Activated T-helper 1 cell treated with anti-CD3 and anti-CD28 coated beads, Interleukin-12 subunit alpha, Interleukin-12 subunit beta, Interleukin-2, Interleukin-4 antibody, amounts not matched to agents 30 ng/mL and 10 ng/mL and 1 ng/mL, durations not matched to agents 14 hours and 24 hours and 36 hours (primary cell): ENCODE measurements at regions of chr1 and their contacts with region 1.

Region 1: DNA sequence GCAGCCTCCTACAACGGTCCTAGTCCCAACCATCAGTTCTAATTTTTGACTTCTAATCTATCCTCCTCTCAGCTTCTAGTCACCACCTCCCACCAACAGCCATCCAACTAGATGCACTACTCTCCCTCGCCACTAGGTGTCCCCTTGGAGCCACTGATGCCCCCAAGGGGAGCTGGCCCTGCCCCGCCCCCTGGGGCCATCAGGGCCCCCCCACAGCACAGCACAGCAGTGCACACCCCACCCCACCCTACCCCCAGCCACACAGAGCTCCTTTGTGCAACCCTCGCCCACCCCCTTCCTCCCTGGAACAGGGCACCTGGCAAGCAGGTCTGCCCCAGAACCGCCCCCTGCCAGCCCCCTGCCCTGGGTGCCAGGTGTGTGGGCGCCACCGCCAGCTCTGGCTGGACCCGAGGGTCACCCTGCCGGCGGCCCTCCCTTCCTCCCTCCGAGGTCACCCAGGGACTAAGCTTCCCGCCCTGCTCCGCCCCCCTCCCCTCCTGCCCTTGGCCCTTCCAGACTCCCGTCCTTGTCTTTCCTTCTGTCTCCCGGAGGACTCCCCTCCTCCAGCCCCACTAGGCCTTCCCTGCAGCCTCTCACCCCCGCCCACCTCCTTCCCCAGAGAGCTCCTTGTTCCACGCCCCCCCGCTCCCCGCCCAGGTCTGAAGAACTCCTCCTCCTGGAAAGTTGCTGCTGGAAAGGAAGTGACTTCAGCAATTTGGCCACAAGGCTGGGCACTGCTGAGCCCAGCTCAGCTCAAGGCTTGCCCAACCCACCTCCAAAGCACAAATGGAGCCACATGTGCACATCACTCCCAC is 47.0 kb downstream of the AHDC1 start:
- DNase-seq: peak; percentile 65
- H3K4me3 Mint-ChIP-seq: peak overlapping the region; percentile 54
- H3K27ac Mint-ChIP-seq: peak overlapping the region; percentile 84
- H3K4me1 Mint-ChIP-seq: peaks cover 49% of the 10 kb centered on the region
- H3K27me3 Mint-ChIP-seq: no peaks in the 10 kb centered on the region

Region 2: DNA sequence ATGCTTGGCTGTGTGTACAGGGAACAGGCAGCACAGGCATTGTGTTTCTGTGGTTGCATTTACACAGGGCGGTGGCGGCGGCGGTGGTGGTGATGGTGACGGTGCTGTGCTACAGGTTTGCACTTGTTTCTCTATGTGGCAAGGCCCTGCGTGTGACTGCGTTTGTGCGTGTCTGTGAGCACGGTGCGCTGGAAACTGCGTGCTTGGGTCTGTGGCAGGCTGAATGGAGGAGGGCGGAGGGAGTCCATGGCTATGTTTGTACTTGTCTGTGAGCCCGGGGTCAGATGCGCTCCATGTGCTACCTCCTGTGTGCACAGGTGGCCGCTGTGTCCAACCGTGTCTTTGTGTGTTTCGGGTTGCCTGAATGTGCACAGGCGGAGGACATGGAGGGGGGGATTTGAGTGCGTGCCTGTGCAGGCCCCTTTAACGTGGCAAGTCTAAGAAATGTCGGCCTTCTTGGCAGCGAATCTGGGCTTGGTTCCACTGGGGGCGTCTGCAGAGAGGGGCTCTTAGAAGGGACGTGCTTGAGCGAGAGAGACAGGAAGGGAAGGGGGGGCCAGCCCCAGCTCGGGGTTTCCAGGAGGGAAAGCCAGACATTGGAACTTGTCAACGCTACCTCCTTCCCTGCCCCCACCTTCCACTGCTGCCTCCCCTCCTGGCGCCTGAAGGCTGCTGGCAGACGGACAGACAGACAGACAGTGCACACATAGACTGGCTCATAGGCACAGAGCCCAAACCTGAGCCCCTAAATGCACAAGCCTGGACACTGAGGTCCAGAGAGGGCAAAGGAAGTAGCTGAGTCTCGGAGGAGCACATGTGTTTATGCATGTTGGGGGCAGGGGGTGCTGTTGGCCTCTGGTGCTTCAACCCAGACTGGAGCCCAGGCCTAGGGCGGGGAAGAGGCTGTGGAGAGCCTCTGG is 34.3 kb before region 1 on chr1:
- intact Hi-C with region 1: loop called (anchors 1 kb)
- DNase-seq: peak; percentile 59
- H3K4me3 Mint-ChIP-seq: peak overlapping the region; percentile 90
- H3K27ac Mint-ChIP-seq: peak overlapping the region; percentile 97
- H3K4me1 Mint-ChIP-seq: peaks cover 79% of the 10 kb centered on the region
- H3K27me3 Mint-ChIP-seq: no peaks in the 10 kb centered on the region

Region 3: GRCh38 chr1:27568300-27569087 is 11.5 kb after region 1 on chr1:
- intact Hi-C with region 1: loop called (anchors 1 kb)
- DNase-seq: peak; percentile 94
- H3K4me3 Mint-ChIP-seq: peak overlapping the region; percentile 67
- H3K27ac Mint-ChIP-seq: no peak overlapping the region
- H3K4me1 Mint-ChIP-seq: peaks cover 18% of the 10 kb centered on the region
- H3K27me3 Mint-ChIP-seq: no peaks in the 10 kb centered on the region

Region 4: DNA sequence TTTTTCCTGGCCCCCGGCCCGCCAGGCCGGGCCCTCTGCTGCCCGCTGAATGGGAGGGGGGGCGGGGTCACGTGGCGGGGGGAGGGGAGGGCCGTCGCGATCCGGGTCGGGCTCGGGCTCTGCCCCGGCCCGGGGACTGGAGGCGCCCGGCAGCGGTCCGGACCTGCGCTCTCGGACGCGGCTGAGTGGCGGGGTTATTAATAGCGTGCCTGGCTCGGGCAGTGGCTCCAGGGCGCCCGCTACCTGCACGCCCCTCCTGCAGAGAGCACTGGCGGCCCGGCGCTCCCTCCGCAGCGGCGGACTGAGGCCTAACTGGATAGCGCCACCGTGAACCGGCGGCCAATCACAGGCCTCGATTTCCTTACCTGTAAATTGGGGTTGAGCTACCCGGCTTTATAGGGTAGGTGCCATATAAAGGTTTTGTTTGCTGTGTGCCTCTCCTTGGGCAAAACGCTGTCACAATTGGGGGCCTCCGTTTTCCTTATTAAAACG is 18.9 kb after region 1 on chr1:
- intact Hi-C with region 1: loop called (anchors 2 kb)
- DNase-seq: no peak
- H3K4me3 Mint-ChIP-seq: no peak overlapping the region
- H3K27ac Mint-ChIP-seq: no peak overlapping the region
- H3K4me1 Mint-ChIP-seq: peaks cover 15% of the 10 kb centered on the region
- H3K27me3 Mint-ChIP-seq: peaks cover 27% of the 10 kb centered on the region